ENCODE measurements at regions of chr17 and their contacts with region 1.

Region 1: GRCh38 chr17:78781104-78781947 is 747 bp downstream of the CYTH1 start:
- DNase-seq: peak; percentile 56
- H3K4me3 Mint-ChIP-seq: peak overlapping the region; percentile 82
- H3K27ac Mint-ChIP-seq: peak overlapping the region; percentile 96
- H3K4me1 Mint-ChIP-seq: peaks cover 64% of the 10 kb centered on the region
- H3K27me3 Mint-ChIP-seq: no peaks in the 10 kb centered on the region

Region 2: GRCh38 chr17:78748730-78749317 is 32.5 kb before region 1 on chr17:
- CTCF ChIA-PET with region 1: interaction called, 10 read pairs
- DNase-seq: peak; percentile 90
- H3K4me3 Mint-ChIP-seq: peak overlapping the region; percentile 72
- H3K27ac Mint-ChIP-seq: peak overlapping the region; percentile 91
- H3K4me1 Mint-ChIP-seq: peaks cover 96% of the 10 kb centered on the region
- H3K27me3 Mint-ChIP-seq: no peaks in the 10 kb centered on the region

Region 3: GRCh38 chr17:78769196-78769773 is 12.0 kb before region 1 on chr17:
- CTCF ChIA-PET with region 1: interaction called, 11 read pairs
- DNase-seq: peak; percentile 49
- H3K4me3 Mint-ChIP-seq: no peak overlapping the region
- H3K27ac Mint-ChIP-seq: no peak overlapping the region
- H3K4me1 Mint-ChIP-seq: peaks cover 52% of the 10 kb centered on the region
- H3K27me3 Mint-ChIP-seq: no peaks in the 10 kb centered on the region

Measured in activated naive CD4-positive, alpha-beta T cell treated with anti-CD3 and anti-CD28 coated beads, Interleukin-2, amount 10 ng/mL, durations not matched to agents 7 days and 5 days (primary cell).